ENCODE measurements at regions of chr17 and their contacts with region 1.

Region 1: DNA sequence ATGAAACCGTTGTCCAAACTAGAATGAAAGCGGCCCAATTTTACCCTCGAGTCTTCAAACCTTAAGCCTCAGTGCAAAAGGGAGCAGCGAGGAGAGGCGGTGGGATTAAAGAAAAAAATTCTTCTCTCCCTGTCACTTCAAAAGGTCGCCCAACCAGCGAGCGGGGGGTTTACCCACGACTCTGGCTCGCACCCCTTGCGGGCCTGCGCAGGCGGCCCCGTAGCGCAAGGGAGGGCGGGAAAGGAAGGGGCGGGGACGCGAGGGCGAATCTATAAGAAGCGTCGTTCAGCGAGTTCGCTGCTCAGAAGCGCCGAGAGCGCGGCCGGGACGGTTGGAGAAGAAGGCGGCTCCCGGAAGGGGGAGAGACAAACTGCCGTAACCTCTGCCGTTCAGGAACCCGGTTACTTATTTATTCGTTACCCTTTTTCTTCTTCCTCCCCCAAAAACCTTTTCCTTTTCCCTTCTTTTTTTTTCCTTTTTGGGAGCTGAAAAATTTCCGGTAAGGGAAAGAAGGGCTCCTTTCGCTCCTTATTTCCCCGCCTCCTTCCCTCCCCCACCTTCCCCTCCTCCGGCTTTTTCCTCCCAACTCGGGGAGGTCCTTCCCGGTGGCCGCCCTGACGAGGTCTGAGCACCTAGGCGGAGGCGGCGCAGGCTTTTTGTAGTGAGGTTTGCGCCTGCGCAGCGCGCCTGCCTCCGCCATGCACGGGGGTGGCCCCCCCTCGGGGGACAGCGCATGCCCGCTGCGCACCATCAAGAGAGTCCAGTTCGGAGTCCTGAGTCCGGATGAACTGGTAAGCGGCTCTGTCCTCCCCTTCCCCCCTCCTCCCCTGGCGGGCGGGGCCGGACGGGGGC is at the start of gene POLR2A:
- DNase-seq: peak; percentile 96 to 99 (median 98)
- ATAC-seq: peak; percentile 66
- H3K4me3 ChIP-seq: peak within 1 kb of the TSS; percentile 95 to 98
- H3K4me3 Mint-ChIP-seq: peak within 1 kb of the TSS; percentile 100
- H3K27ac ChIP-seq: peak within 1 kb of the TSS; percentile 99 to 100
- H3K27ac Mint-ChIP-seq: peak within 1 kb of the TSS; percentile 100
- H3K4me1 ChIP-seq: peaks cover 58% of the 10 kb centered on the region
- H3K4me1 Mint-ChIP-seq: peaks cover 74% of the 10 kb centered on the region
- H3K27me3 ChIP-seq: no peaks in the 10 kb centered on the region
- H3K27me3 Mint-ChIP-seq: no peaks in the 10 kb centered on the region
- CTCF ChIP-seq: no peak
- total RNA-seq, gene POLR2A: 508 to 546 TPM

Region 2: DNA sequence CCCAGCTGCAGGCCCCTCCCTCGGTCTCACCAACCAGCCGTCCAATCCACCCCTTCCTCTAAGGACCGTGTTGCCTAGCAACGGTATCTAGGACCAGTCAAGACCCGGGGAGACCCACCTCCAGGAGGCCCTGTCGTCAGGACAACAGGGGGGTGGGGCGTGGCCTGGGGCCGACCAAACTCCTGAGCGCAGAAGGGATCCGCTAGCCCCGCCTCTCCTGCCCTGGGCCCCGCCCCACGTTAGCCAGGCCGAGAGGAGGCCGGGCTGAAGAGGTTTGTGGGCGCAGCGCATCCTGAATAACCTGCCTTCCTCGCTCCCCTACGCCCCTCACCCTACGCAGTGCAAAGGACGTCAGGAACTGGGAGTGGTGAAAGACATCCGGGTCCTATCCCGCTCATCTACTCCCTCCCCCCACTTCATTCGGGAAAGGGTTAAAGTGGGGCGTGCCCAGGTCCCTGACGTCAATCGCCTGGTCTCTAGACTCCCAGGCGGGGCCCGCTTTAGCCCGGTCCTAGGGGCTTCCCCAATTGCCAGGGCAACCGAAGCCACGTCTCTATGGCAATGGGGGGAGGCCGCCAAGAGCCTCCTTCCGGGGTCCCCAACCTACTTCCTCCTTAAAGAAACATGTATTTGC is 279.3 kb before region 1 on chr17:
- CTCF ChIA-PET with region 1: no interaction called
- POLR2A ChIA-PET with region 1: no interaction called
- intact Hi-C with region 1: loop called (anchors 1 to 2 kb)
- DNase-seq: peak; percentile 87 to 100 (median 96)
- ATAC-seq: peak; percentile 84
- H3K4me3 ChIP-seq: peak overlapping the region; percentile 55 to 73
- H3K4me3 Mint-ChIP-seq: peak overlapping the region; percentile 87
- H3K27ac ChIP-seq: peak overlapping the region; percentile 90
- H3K27ac Mint-ChIP-seq: peak overlapping the region; percentile 91
- H3K4me1 ChIP-seq: peaks cover 20% of the 10 kb centered on the region
- H3K4me1 Mint-ChIP-seq: peaks cover 29% of the 10 kb centered on the region
- H3K27me3 ChIP-seq: no peaks in the 10 kb centered on the region
- H3K27me3 Mint-ChIP-seq: no peaks in the 10 kb centered on the region
- CTCF ChIP-seq: no peak

Region 3: DNA sequence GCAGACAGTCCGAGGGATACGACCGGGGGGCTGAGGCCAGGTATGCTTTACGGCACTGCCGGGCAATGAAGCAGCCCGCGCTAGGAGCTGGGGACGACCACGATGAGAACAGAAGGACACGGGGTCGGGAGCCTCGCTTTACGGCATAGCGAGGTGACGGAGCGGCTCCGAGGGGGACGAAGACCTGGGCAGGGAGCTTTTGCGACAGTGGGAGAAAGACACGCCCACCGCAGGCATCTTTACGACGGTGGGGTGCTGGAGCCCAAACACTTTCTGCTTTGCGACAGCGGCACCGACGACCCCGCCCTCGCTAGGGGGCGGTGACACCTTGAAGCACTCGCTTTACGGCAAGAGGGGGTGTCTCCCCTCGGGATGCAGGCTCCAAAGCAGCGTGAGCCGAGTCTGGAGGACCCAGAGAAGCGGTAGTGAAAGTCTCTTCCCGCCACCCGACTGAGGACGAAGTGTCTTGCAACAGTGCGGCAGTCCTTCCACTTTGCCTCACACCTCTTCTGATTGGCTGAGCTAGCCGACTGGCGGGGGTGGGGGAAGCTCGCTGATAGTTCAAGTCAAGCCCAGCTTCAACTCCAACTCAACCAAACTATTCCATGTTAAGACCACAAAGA is 154.8 kb before region 1 on chr17:
- CTCF ChIA-PET with region 1: no interaction called
- POLR2A ChIA-PET with region 1: interaction called, 10 read pairs
- intact Hi-C with region 1: no loop called
- DNase-seq: peak; percentile 92 to 99 (median 96)
- ATAC-seq: peak; percentile 79
- H3K4me3 ChIP-seq: peak overlapping the region; percentile 96 to 100
- H3K4me3 Mint-ChIP-seq: peak overlapping the region; percentile 98
- H3K27ac ChIP-seq: peak overlapping the region; percentile 80 to 95
- H3K27ac Mint-ChIP-seq: peak overlapping the region; percentile 96
- H3K4me1 ChIP-seq: peaks cover 36% of the 10 kb centered on the region
- H3K4me1 Mint-ChIP-seq: peaks cover 37% of the 10 kb centered on the region
- H3K27me3 ChIP-seq: no peaks in the 10 kb centered on the region
- H3K27me3 Mint-ChIP-seq: no peaks in the 10 kb centered on the region
- CTCF ChIP-seq: no peak

Region 4: GRCh38 chr17:7403977-7404736 is 80.1 kb before region 1 on chr17 and contains the start of gene TMEM256:
- CTCF ChIA-PET with region 1: no interaction called
- POLR2A ChIA-PET with region 1: interaction called, 16 read pairs
- intact Hi-C with region 1: loop called (anchors 1 kb)
- DNase-seq: peak; percentile 90 to 99 (median 94)
- ATAC-seq: peak; percentile 83
- H3K4me3 ChIP-seq: peak within 1 kb of the TSS; percentile 75 to 83
- H3K4me3 Mint-ChIP-seq: peak within 1 kb of the TSS; percentile 95
- H3K27ac ChIP-seq: peak within 1 kb of the TSS; percentile 61 to 81
- H3K27ac Mint-ChIP-seq: peak within 1 kb of the TSS; percentile 96
- H3K4me1 ChIP-seq: peaks cover 24% of the 10 kb centered on the region
- H3K4me1 Mint-ChIP-seq: peaks cover 31% of the 10 kb centered on the region
- H3K27me3 ChIP-seq: no peaks in the 10 kb centered on the region
- H3K27me3 Mint-ChIP-seq: no peaks in the 10 kb centered on the region
- CTCF ChIP-seq: no peak
- total RNA-seq, gene TMEM256: 27.1 to 29.1 TPM

Region 5: GRCh38 chr17:7462474-7463371 is 21.6 kb before region 1 on chr17:
- CTCF ChIA-PET with region 1: interaction called, 5 read pairs
- POLR2A ChIA-PET with region 1: interaction called, 68 read pairs
- intact Hi-C with region 1: no loop called
- DNase-seq: peak in 1 of 9 experiments; percentile 12
- ATAC-seq: no peak
- H3K4me3 ChIP-seq: no peak overlapping the region
- H3K4me3 Mint-ChIP-seq: no peak overlapping the region
- H3K27ac ChIP-seq: no peak overlapping the region
- H3K27ac Mint-ChIP-seq: no peak overlapping the region
- H3K4me1 ChIP-seq: peaks cover 7% of the 10 kb centered on the region
- H3K4me1 Mint-ChIP-seq: peaks cover 7% of the 10 kb centered on the region
- H3K27me3 ChIP-seq: no peaks in the 10 kb centered on the region
- H3K27me3 Mint-ChIP-seq: no peaks in the 10 kb centered on the region
- CTCF ChIP-seq: no peak

Region 6: DNA sequence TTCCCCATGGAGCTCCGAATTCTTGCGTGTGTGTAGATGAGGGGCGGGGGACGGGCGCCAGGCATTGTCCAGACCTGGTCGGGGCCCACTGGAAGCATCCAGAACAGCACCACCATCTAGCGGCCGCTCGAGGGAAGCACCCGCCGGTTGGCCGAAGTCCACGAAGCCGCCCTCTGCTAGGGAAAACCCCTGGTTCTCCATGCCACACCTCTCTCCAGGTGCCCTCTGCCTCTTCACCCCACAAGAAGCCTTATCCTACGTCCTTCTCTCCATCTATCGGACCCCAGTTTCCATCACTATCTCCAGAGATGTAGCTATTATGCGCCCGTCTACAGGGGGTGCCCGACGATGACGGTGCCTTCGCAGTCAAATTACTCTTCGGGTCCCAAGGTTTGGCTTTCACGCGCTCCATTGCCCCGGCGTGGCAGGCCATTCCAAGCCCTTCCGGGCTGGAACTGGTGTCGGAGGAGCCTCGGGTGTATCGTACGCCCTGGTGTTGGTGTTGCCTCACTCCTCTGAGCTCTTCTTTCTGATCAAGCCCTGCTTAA is 76.8 kb after region 1 on chr17:
- CTCF ChIA-PET with region 1: interaction called, 13 read pairs
- POLR2A ChIA-PET with region 1: interaction called, 24 read pairs
- intact Hi-C with region 1: loop called (anchors 1 kb)
- DNase-seq: peak; percentile 67 to 89 (median 81)
- ATAC-seq: peak; percentile 68
- H3K4me3 ChIP-seq: peak overlapping the region; percentile 50 to 95
- H3K4me3 Mint-ChIP-seq: peak overlapping the region; percentile 94
- H3K27ac ChIP-seq: peak overlapping the region; percentile 91 to 97
- H3K27ac Mint-ChIP-seq: peak overlapping the region; percentile 99
- H3K4me1 ChIP-seq: peaks cover 49% of the 10 kb centered on the region
- H3K4me1 Mint-ChIP-seq: peaks cover 50% of the 10 kb centered on the region
- H3K27me3 ChIP-seq: no peaks in the 10 kb centered on the region
- H3K27me3 Mint-ChIP-seq: no peaks in the 10 kb centered on the region
- CTCF ChIP-seq: peak; percentile 85

Region 7: GRCh38 chr17:7856883-7857723 is 372.8 kb after region 1 on chr17 and contains the start of gene NAA38:
- CTCF ChIA-PET with region 1: no interaction called
- POLR2A ChIA-PET with region 1: no interaction called
- intact Hi-C with region 1: loop called in 1 of 2 experiments (anchors 5 kb)
- DNase-seq: peak; percentile 87 to 99 (median 95)
- ATAC-seq: peak; percentile 81
- H3K4me3 ChIP-seq: peak within 1 kb of the TSS; percentile 88 to 98
- H3K4me3 Mint-ChIP-seq: no peak within 1 kb of the TSS
- H3K27ac ChIP-seq: peak within 1 kb of the TSS; percentile 93 to 94
- H3K27ac Mint-ChIP-seq: no peak within 1 kb of the TSS
- H3K4me1 ChIP-seq: peaks cover 28% of the 10 kb centered on the region
- H3K4me1 Mint-ChIP-seq: peaks cover 5% of the 10 kb centered on the region
- H3K27me3 ChIP-seq: no peaks in the 10 kb centered on the region
- H3K27me3 Mint-ChIP-seq: no peaks in the 10 kb centered on the region
- CTCF ChIP-seq: no peak
- total RNA-seq, gene NAA38: 14.3 to 16.5 TPM

Measured in CD8-positive, alpha-beta T cell (primary cell).